ENCODE measurements at regions of chr12 and their contacts with region 1.

Region 1: DNA sequence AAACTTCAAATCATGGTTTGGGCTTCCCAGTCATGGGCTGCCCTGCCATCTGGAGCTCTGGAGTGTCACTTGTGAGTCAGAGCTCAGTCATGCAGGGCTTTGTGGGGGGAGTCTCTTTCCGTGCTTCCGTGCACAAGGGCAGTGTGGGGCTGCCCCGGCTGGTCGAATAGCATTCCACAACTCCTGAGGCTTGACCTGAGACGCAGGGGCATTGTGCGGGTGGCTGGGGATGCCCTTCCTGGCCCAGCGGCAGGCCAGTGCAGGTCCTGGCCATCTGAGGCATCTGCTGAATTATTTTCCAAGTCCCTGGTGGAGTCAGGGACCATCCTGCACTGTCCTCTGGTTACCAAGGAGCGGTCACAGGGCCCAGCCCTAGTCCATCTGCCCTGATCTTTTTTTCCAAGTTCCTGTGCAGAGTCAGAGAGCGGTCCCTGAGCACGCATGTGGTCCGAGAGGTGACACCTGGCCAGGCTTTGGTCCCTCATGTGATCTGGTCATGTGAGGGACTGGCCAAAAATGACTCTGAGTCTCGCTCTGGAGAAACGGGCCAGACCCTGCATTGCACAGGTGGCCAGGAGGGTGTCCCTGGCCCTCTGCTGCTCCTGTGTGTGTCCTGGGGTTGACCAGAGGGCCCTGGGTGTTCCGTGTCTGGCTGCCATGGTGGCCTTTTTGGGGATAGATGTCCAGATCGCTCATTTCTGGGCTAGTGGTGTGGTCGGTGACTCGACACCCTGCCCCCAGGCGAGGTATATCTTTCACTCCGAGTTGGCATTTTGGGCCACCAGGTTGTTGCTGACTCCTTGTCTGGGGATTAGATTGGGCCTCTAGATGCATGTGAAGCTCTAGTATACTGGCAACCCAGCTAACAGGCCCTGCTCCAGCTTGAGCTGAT is 166.9 kb upstream of the ALG10B start:
- DNase-seq: no peak
- ATAC-seq: no peak
- H3K4me3 ChIP-seq: no peak overlapping the region
- H3K27ac ChIP-seq: no peak overlapping the region
- H3K4me1 ChIP-seq: no peaks in the 10 kb centered on the region
- H3K27me3 ChIP-seq: no peaks in the 10 kb centered on the region
- CTCF ChIP-seq: no peak
- POLR2A ChIP-seq: no peak

Region 2: GRCh38 chr12:38053655-38054464 is 95.8 kb before region 1 on chr12:
- intact Hi-C with region 1: loop called in 1 of 2 experiments (anchors 10 kb)
- DNase-seq: peak in 2 of 3 donors; percentile 54 to 64
- ATAC-seq: peak; percentile 57 to 74 (median 62)
- H3K4me3 ChIP-seq: no peak overlapping the region
- H3K27ac ChIP-seq: no peak overlapping the region
- H3K4me1 ChIP-seq: no peaks in the 10 kb centered on the region
- H3K27me3 ChIP-seq: no peaks in the 10 kb centered on the region
- CTCF ChIP-seq: peak; percentile 39 to 51 (median 47)
- POLR2A ChIP-seq: no peak

Region 3: GRCh38 chr12:38102197-38102596 is 47.4 kb before region 1 on chr12:
- intact Hi-C with region 1: no loop called
- DNase-seq: no peak
- ATAC-seq: no peak
- H3K4me3 ChIP-seq: no peak overlapping the region
- H3K27ac ChIP-seq: no peak overlapping the region
- H3K4me1 ChIP-seq: no peaks in the 10 kb centered on the region
- H3K27me3 ChIP-seq: no peaks in the 10 kb centered on the region
- CTCF ChIP-seq: no peak
- POLR2A ChIP-seq: no peak

Region 4: DNA sequence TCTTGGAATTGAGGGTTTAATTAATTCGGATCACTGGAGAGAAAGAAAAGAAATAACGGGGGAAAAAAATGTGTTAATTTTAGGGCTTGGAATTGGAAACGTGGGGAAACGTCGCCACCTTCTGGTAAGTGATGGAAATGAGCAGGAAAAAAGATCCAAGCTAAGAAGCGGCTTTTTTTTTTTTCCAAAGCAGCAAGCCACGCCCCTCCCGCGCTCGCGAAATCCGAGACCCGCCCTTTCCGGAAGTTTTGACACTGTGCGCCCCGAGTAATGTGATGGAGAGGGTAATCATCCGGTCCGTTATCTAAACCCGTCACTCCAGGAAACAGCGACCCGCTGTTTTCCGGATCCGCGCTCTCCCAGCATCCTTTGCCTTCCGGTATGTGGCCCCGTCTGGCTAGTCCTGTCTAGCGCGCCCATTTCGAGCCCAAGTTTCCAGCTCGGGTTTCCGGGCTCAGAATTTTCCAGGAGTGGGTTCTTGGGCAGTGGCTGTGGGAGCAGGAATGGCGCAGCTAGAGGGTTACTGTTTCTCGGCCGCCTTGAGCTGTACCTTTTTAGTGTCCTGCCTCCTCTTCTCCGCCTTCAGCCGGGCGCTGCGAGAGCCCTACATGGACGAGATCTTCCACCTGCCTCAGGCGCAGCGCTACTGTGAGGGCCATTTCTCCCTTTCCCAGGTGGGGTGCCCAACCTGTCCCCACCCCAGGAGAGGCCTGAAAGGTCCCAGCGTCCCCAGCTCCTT is 166.9 kb after region 1 on chr12 and contains the start of gene ALG10B:
- intact Hi-C with region 1: loop called in 1 of 2 experiments (anchors 10 kb)
- DNase-seq: peak; percentile 91 to 95 (median 93)
- ATAC-seq: peak; percentile 99 to 100 (median 100)
- H3K4me3 ChIP-seq: peak within 1 kb of the TSS; percentile 70 to 77 (median 76)
- H3K27ac ChIP-seq: peak within 1 kb of the TSS; percentile 62 to 82 (median 77)
- H3K4me1 ChIP-seq: peaks cover 0 to 10% (median 0%) of the 10 kb centered on the region in 4 donors
- H3K27me3 ChIP-seq: no peaks in the 10 kb centered on the region
- CTCF ChIP-seq: peak; percentile 64 to 77 (median 72)
- POLR2A ChIP-seq: no peak
- total RNA-seq, gene ALG10B: 1.8 to 5.3 (median 4.2) TPM

Region 5: DNA sequence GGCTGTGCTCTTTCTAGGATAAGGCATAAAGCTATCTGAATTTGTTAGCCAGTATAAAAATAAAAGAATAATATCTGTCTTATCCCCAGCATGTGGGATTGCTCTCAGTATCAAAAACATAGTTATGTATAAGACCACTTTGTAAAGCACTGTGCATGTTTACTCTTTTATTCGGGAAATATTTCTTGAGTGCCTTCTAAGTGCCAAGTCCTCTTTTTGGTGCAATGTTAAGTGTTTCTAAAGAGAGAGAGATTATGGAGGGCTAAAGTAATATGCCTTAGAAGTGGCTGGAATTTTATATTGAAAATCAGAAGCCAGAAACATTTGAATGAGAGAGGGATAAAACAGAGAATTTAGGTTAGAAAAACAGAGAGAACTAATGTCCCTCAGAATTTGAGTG is 378.9 kb after region 1 on chr12:
- intact Hi-C with region 1: no loop called
- DNase-seq: no peak
- ATAC-seq: no peak
- H3K4me3 ChIP-seq: no peak overlapping the region
- H3K27ac ChIP-seq: no peak overlapping the region
- H3K4me1 ChIP-seq: no peaks in the 10 kb centered on the region
- H3K27me3 ChIP-seq: no peaks in the 10 kb centered on the region
- CTCF ChIP-seq: no peak
- POLR2A ChIP-seq: no peak

Measured in right lobe of liver (tissue), 6 donors.